Activated CD4-positive, alpha-beta memory T cell treated with anti-CD3 and anti-CD28 coated beads, Interleukin-2, amount 10 ng/mL, durations not matched to agents 7 days and 5 days (primary cell): ENCODE measurements at regions of chr6 and their contacts with region 1.

Region 1: DNA sequence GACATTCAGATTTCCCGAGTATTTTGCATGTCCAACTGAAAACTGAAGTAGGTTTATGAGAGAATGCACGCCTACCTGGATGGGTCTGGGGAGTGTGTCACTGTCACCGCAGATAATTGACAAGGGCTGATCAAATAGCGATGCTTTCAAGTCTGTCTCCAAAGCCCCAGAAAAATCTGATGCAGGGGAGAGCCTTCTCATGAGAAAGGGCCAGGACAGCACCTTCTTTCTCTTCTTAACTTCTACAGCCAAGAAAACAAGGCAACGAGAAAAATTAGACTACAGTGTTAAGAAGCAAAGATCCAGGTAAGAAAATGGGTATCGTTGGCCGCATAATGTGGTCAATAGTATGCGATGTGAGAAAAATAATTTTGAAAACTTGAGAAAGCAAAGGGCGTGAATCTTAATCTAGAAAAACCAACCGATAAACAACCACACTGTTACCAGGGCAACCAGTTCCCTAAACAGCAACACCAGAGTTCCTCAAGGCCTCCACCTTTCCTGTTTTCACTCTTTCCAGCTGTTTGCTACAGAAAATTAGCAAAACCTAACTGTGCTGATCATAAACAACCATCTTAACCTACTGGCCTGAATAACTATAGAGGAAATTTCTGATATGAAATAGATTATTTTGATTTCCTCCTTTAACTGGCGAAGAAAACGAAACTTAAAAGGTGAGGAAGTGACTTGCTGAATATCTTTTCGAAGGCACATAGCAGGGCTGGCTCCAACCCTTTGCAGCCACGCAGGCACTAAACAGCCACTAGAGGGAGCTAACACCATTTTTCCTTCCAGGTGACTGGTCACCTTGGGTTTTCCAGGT is 2.6 kb downstream of the TAGAP start:
- DNase-seq: peak; percentile 83
- H3K4me3 Mint-ChIP-seq: peak overlapping the region; percentile 95
- H3K27ac Mint-ChIP-seq: peak overlapping the region; percentile 97
- H3K4me1 Mint-ChIP-seq: peaks cover 66% of the 10 kb centered on the region
- H3K27me3 Mint-ChIP-seq: no peaks in the 10 kb centered on the region

Region 2: DNA sequence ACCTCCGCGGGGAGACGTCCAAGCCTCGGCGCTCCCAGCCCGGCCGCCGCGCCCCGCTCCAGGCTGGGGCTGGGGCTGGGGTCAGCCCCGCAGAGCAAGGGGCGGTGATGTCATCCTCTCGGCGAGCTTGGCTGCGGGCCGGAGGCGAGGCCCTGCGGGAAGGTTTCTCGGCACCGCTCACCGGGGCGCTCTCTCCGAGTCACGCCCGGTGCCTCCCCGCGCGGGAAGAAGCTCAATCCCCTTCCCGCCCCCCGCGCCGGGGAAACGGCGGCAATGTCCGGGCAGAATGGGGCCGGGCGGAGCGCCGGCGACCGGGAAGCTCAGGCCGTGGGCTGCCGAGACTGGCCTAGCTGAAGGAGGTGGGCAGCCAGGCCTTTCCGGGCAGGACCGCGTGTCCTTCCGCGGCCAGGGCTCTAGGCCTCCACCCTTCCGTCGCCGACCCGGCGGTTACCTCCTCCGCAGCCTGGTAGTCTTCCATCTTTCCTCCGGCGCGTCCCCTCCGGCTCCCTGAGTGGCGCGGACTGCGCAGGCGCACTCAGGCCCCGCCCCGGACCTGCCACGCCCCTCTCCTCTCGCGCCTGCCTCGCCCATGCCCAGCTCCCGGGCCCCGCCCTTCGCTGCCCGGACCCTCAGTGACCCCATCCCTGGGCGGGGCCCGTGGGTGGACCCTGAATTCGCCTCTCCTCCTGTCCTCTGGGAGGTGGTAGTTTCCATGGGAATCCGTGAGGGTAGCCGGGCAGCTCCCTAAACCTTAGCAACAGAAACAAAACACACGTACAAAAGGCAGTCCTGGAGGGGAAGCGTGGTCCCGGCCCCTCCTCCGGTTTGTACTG is 397.8 kb before region 1 on chr6 and contains the start of gene DYNLT1:
- CTCF ChIA-PET with region 1: no interaction called
- POLR2A ChIA-PET with region 1: interaction called, 17 read pairs
- DNase-seq: peak; percentile 92
- H3K4me3 Mint-ChIP-seq: peak within 1 kb of the TSS; percentile 100
- H3K27ac Mint-ChIP-seq: peak within 1 kb of the TSS; percentile 97
- H3K4me1 Mint-ChIP-seq: peaks cover 75% of the 10 kb centered on the region
- H3K27me3 Mint-ChIP-seq: no peaks in the 10 kb centered on the region
- total RNA-seq, gene DYNLT1: 130 to 133 TPM

Region 3: DNA sequence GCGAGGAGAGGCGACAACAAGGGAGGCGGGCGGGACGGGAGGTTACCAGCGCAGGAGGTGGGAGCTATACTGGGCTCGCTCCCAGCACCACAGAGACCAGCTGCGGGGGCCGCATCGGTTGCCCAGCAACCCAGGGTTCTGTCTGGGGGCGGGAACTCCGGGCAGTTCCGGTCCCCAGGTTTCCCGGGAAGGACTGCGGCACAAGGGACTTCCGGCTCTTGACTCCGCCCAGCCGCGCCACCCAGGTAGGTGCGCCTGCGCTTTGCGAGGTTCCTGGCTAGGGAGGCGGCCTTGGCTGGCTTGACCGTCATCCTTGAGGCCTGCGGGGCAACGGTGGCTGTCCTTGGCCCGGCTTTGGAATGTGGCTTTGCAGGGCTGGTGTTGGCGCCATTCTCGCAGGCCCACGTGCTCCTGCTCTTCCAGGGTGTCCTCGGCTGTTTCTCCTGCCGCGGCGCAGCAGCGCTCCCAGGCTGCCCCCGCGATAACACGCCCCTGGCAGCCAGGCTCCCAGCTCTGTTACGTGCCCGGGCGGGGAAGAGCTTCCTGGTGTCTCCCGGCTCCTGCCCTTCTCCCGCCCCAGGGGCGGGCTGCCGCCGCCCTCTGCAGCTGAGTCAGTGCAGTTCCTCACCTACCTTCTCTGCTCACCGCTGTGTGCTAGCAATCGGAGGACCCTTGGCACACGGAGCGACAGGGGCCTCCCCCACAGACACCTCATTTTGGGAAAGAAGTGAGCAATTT is 42.4 kb before region 1 on chr6 and contains the start of gene RSPH3:
- CTCF ChIA-PET with region 1: interaction called, 13 read pairs
- POLR2A ChIA-PET with region 1: interaction called, 16 read pairs
- DNase-seq: peak; percentile 92
- H3K4me3 Mint-ChIP-seq: peak within 1 kb of the TSS; percentile 97
- H3K27ac Mint-ChIP-seq: peak within 1 kb of the TSS; percentile 72
- H3K4me1 Mint-ChIP-seq: peaks cover 44% of the 10 kb centered on the region
- H3K27me3 Mint-ChIP-seq: no peaks in the 10 kb centered on the region
- total RNA-seq, gene RSPH3: 3.4 to 3.7 TPM

Region 4: DNA sequence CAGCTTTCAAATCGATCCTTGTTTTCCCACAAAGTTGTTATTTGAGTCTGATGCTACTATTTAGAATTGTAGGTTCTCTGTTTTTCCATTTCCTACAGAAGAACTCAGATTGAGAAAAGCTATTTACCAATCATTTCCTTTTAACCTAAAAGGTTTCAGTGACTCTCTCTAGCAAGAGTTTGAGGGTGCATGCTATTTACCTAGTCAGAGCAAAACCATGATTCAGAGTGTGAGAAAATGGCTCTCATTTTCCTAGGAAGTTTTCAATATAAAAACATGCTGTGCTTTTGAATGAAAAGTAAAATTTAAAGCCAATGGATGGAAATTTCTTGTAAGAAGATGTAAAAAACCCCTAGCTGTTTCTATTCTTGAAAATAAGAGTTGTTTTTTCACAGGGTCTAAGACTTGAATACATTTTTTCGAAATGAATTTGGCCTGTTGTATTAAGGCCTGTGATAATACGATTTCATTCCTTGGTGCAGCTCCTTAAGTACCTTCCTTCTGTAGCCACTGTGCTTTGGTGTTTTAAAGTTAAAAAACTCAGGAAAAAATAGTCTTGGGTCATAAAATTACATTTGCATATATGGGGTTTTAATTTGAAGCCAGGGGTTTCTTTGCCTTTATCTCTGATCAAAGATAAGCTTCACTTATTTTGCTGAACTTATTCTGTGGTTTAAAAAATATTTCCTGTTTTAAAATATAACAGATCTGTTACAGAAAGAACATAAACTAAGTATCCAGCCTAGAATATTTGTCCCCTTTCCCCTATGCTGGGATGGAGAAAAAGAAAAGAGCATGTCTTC is 24.3 kb before region 1 on chr6:
- CTCF ChIA-PET with region 1: interaction called, 6 read pairs
- POLR2A ChIA-PET with region 1: interaction called, 44 read pairs
- DNase-seq: no peak
- H3K4me3 Mint-ChIP-seq: no peak overlapping the region
- H3K27ac Mint-ChIP-seq: peak overlapping the region; percentile 4
- H3K4me1 Mint-ChIP-seq: peaks cover 39% of the 10 kb centered on the region
- H3K27me3 Mint-ChIP-seq: no peaks in the 10 kb centered on the region

Region 5: DNA sequence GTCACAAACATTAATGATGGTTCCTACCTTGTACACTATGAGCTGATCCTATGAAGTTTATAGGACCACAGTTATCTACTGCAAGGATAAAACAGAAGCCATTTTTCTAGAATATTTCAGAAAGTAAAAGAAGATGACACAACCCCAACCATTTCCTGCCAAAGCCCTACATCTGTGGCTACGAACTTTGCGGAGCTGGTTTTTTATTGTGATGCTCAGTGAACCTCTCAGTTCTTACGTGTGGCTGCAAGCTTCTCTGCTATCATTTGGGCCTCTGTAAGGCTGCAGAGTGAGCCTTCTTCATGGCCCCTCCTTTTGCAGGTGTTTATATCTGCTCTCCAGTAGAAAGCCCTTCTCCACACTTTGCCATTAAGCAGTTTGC is 20.3 kb after region 1 on chr6:
- CTCF ChIA-PET with region 1: interaction called, 28 read pairs
- POLR2A ChIA-PET with region 1: interaction called, 356 read pairs
- DNase-seq: peak; percentile 76
- H3K4me3 Mint-ChIP-seq: peak overlapping the region; percentile 26
- H3K27ac Mint-ChIP-seq: peak overlapping the region; percentile 95
- H3K4me1 Mint-ChIP-seq: peaks cover 80% of the 10 kb centered on the region
- H3K27me3 Mint-ChIP-seq: peaks cover 4% of the 10 kb centered on the region

Region 6: DNA sequence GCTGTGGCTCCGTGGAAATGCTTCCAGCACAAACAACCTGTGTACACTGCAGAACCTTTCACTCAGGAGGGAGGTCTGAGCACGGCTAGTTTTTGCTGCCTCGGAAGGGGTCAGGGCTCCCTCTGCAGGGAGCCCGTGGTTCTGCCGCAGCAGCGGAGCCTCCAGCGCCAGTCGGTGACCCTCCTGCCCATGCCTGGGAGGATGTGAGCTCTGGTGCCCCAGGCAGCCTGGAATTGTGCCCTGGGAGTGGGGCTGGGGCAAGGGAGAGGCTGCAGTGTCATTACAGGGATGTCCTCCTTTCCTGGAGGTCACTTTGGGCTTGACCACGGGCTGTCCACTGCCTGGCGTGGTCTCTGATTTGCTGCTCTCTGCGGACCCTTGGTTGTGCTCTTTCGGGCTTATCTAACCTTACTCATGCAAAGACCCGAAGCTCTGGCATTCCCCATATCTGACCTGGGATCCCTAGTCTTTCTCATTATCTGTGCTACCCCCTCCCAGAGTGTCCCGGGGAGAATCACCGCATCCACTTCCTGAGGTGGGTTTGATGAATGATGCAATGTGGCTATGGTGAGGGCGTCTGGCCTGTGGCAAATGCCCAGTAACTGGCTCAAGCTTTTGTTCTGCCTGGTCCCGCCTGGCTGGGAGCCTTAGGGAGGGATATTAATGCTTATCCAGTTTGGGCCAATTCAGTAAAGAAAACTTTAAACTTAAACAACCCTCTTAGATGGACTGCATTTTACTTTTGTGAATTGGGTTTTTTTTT is 62.1 kb after region 1 on chr6:
- CTCF ChIA-PET with region 1: interaction called, 163 read pairs
- POLR2A ChIA-PET with region 1: interaction called, 239 read pairs
- DNase-seq: peak; percentile 84
- H3K4me3 Mint-ChIP-seq: no peak overlapping the region
- H3K27ac Mint-ChIP-seq: peak overlapping the region; percentile 22
- H3K4me1 Mint-ChIP-seq: peaks cover 64% of the 10 kb centered on the region
- H3K27me3 Mint-ChIP-seq: no peaks in the 10 kb centered on the region

Region 7: GRCh38 chr6:159134701-159135364 is 92.6 kb after region 1 on chr6:
- CTCF ChIA-PET with region 1: interaction called, 14 read pairs
- POLR2A ChIA-PET with region 1: interaction called, 9 read pairs
- DNase-seq: peak; percentile 79
- H3K4me3 Mint-ChIP-seq: no peak overlapping the region
- H3K27ac Mint-ChIP-seq: no peak overlapping the region
- H3K4me1 Mint-ChIP-seq: peaks cover 2% of the 10 kb centered on the region
- H3K27me3 Mint-ChIP-seq: peaks cover 30% of the 10 kb centered on the region